ENCODE measurements at regions of chr5 and their contacts with region 1.

Region 1: DNA sequence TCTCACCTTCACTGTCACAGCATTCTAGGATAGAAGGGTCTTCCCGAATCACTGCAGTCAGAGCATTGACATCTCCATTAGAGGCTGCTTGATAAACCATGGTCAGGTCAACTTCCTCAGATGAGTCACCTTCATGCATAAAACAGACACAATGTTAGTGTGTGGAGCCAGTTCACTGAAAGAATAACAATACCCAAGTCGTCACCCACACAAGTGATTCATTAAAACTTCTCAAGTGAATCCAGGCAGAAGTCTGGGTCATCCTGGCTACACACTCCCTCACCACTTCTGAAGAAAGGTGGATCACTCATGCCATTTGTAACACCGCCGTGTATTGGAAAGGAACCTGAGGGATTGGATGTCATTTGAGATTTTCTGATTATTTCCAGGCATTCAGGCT is 49.6 kb downstream of the ANKRD55 start:
- DNase-seq: peak; percentile 75 to 88 (median 83)
- H3K4me3 ChIP-seq: no peak overlapping the region
- H3K4me3 Mint-ChIP-seq: no peak overlapping the region
- H3K27ac ChIP-seq: peak overlapping the region in 1 of 2 donors; percentile 50
- H3K27ac Mint-ChIP-seq: peak overlapping the region in 5 of 7 donors; percentile 37 to 86 (median 77)
- H3K4me1 ChIP-seq: peaks cover 19 to 24% of the 10 kb centered on the region in 2 donors
- H3K4me1 Mint-ChIP-seq: peaks cover 30% of the 10 kb centered on the region
- H3K27me3 ChIP-seq: no peaks in the 10 kb centered on the region
- H3K27me3 Mint-ChIP-seq: peaks cover 0 to 3% (median 3%) of the 10 kb centered on the region in 3 donors
- CTCF ChIP-seq: no peak

Region 2: GRCh38 chr5:55850839-55851674 is 332.4 kb before region 1 on chr5 and contains the start of gene IL31RA:
- intact Hi-C with region 1: no loop called
- DNase-seq: peak in 2 of 3 donors; percentile 54 to 63
- H3K4me3 ChIP-seq: peak within 1 kb of the TSS in 1 of 3 experiments; percentile 17
- H3K4me3 Mint-ChIP-seq: no peak within 1 kb of the TSS
- H3K27ac ChIP-seq: peak within 1 kb of the TSS in 1 of 2 donors; percentile 30
- H3K27ac Mint-ChIP-seq: peak within 1 kb of the TSS; percentile 64 to 93 (median 91)
- H3K4me1 ChIP-seq: peaks cover 52 to 55% of the 10 kb centered on the region in 2 donors
- H3K4me1 Mint-ChIP-seq: peaks cover 48% of the 10 kb centered on the region
- H3K27me3 ChIP-seq: no peaks in the 10 kb centered on the region
- H3K27me3 Mint-ChIP-seq: peaks cover 1 to 3% (median 2%) of the 10 kb centered on the region in 3 donors
- CTCF ChIP-seq: no peak
- polyA plus RNA-seq, gene IL31RA: 0.52 to 1.8 (median 1.3) TPM

Region 3: DNA sequence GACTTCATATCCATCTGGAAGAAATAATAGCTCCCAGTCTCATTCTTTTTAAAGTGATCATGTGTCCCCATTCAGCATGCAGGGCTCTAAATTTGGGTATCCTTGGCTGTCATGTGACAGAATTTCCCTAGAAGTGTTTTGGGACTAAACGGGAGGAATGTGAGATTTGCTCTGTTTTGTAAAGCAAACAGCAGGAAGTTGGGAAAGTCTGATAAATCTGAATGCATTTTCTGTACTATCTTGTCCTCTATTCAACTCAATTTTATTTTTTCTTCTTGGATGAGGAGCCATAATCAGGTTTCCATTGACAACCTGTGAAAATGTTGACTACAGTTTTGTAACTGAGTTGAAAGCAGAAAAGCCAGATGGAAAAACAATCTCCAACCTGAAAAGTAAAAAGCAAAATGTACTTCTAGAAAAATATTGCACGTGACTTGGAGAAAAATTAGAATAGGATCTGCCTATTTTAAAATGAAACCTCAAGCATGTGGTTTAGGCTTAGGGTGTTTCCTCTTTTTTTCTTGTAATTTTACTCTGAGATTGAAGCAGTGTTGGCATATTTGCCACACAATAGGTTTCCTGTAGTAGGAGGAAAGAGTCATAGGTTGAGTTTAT is 112.5 kb before region 1 on chr5:
- intact Hi-C with region 1: loop called in 1 of 2 experiments (anchors 10 kb)
- DNase-seq: peak; percentile 32 to 62 (median 43)
- H3K4me3 ChIP-seq: peak overlapping the region in 2 of 3 experiments; percentile 17 to 54
- H3K4me3 Mint-ChIP-seq: peak overlapping the region in 1 of 2 donors; percentile 66
- H3K27ac ChIP-seq: peak overlapping the region; percentile 68 to 74
- H3K27ac Mint-ChIP-seq: peak overlapping the region; percentile 71 to 86 (median 84)
- H3K4me1 ChIP-seq: peaks cover 27 to 46% of the 10 kb centered on the region in 2 donors
- H3K4me1 Mint-ChIP-seq: peaks cover 57% of the 10 kb centered on the region
- H3K27me3 ChIP-seq: no peaks in the 10 kb centered on the region
- H3K27me3 Mint-ChIP-seq: peaks cover 2 to 14% (median 5%) of the 10 kb centered on the region in 3 donors
- CTCF ChIP-seq: no peak

Region 4: GRCh38 chr5:56148453-56148971 is 35.0 kb before region 1 on chr5:
- intact Hi-C with region 1: loop called in 1 of 2 experiments (anchors 5 kb)
- DNase-seq: peak in 1 of 3 donors; percentile 46
- H3K4me3 ChIP-seq: peak overlapping the region in 1 of 3 experiments; percentile 49
- H3K4me3 Mint-ChIP-seq: no peak overlapping the region
- H3K27ac ChIP-seq: peak overlapping the region in 1 of 2 donors; percentile 61
- H3K27ac Mint-ChIP-seq: peak overlapping the region; percentile 61 to 88 (median 83)
- H3K4me1 ChIP-seq: peaks cover 65 to 74% of the 10 kb centered on the region in 2 donors
- H3K4me1 Mint-ChIP-seq: peaks cover 65% of the 10 kb centered on the region
- H3K27me3 ChIP-seq: no peaks in the 10 kb centered on the region
- H3K27me3 Mint-ChIP-seq: peaks cover 0 to 1% (median 0%) of the 10 kb centered on the region in 3 donors
- CTCF ChIP-seq: no peak